Motor neuron (in vitro differentiated cells): ENCODE measurements at regions of chr1 and their contacts with region 1.

Region 1: GRCh38 chr1:77120950-77121349 is 98.3 kb downstream of the PIGK start:
- ATAC-seq: peak; percentile 49 to 88 (median 78)
- H3K4me3 ChIP-seq: no peak overlapping the region
- H3K27ac ChIP-seq: peak overlapping the region in 1 of 2 donors; percentile 9
- H3K4me1 ChIP-seq: peaks cover 5 to 18% of the 10 kb centered on the region in 2 donors

Region 2: GRCh38 chr1:76330991-76331603 is 789.9 kb before region 1 on chr1:
- in situ Hi-C with region 1: loop called in 3 of 9 experiments (anchors 25 kb)
- ATAC-seq: peak in 5 of 8 experiments; percentile 51 to 80 (median 73)
- H3K4me3 ChIP-seq: no peak overlapping the region
- H3K27ac ChIP-seq: no peak overlapping the region
- H3K4me1 ChIP-seq: peaks cover 4 to 10% of the 10 kb centered on the region in 2 donors

Region 3: DNA sequence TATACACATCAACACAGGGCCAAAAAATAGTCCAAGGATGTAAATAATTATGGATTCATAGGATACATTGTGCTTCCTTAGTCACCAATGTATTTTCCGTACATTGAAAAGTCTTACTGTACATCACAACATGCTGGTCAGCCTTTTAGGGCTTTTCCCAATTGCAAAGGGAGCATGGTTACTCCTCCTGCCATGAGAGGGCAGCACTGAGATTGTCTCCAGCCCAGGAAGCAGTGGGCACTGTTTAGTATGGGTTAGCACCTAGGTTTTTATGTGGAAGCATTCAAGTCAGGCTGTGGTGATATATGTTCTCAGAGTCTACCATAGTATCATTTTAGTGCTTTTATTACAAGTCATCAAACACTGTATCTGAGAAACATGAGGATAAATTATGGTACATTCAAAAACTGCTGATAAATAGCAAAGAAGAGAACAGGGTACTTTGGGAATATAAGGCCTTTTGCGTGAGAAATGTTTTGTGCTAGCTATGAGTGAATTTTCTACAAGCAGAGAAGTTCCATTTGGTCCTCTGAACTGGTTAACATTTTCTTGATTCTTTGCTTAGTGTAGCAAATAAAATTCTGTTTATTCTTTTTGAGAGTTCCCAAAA is 219.7 kb before region 1 on chr1:
- in situ Hi-C with region 1: loop called in 1 of 9 experiments (anchors 25 kb)
- ATAC-seq: peak in 7 of 8 experiments; percentile 32 to 79 (median 67)
- H3K4me3 ChIP-seq: no peak overlapping the region
- H3K27ac ChIP-seq: no peak overlapping the region
- H3K4me1 ChIP-seq: no peaks in the 10 kb centered on the region

Region 4: GRCh38 chr1:77230051-77230450 is 109.1 kb after region 1 on chr1:
- in situ Hi-C with region 1: no loop called
- ATAC-seq: no peak
- H3K4me3 ChIP-seq: no peak overlapping the region
- H3K27ac ChIP-seq: no peak overlapping the region
- H3K4me1 ChIP-seq: no peaks in the 10 kb centered on the region

Region 5: GRCh38 chr1:77446841-77447555 is 326.0 kb after region 1 on chr1:
- in situ Hi-C with region 1: no loop called
- ATAC-seq: no peak
- H3K4me3 ChIP-seq: no peak overlapping the region
- H3K27ac ChIP-seq: no peak overlapping the region
- H3K4me1 ChIP-seq: no peaks in the 10 kb centered on the region

Region 6: DNA sequence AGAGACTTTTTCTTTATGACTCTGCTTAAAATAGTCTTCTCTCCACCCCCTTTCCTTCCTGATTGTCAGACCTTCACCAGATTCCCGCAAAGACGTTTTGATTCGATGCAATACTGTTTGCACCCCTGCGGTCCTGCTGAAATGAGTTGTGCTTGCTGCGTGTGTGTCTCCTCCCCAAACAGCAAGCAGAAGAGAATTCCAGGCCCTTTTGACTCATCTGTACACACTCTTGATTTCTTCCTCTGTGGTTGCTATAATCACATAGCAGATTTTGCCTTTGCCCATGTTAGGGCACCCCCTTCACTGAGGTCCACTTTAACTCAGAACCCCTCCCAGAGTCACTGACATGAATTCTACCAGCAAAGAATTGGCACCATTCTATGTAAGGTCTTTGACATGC is 425.0 kb after region 1 on chr1:
- in situ Hi-C with region 1: no loop called
- ATAC-seq: peak in 2 of 8 experiments; percentile 60 to 83
- H3K4me3 ChIP-seq: no peak overlapping the region
- H3K27ac ChIP-seq: no peak overlapping the region
- H3K4me1 ChIP-seq: no peaks in the 10 kb centered on the region